Uterus (tissue), 4 donors: ENCODE measurements at regions of chr3 and their contacts with region 1.

Region 1: GRCh38 chr3:1734494-1735122 is 364.1 kb upstream of the CNTN4 start:
- DNase-seq: no peak
- H3K4me3 ChIP-seq: no peak overlapping the region
- H3K27ac ChIP-seq: no peak overlapping the region
- H3K4me1 ChIP-seq: no peaks in the 10 kb centered on the region
- H3K27me3 ChIP-seq: no peaks in the 10 kb centered on the region
- CTCF ChIP-seq: no peak
- POLR2A ChIP-seq: no peak

Region 2: GRCh38 chr3:1752205-1752604 is 17.6 kb after region 1 on chr3:
- intact Hi-C with region 1: loop called (anchors 1 kb)
- DNase-seq: no peak
- H3K4me3 ChIP-seq: no peak overlapping the region
- H3K27ac ChIP-seq: no peak overlapping the region
- H3K4me1 ChIP-seq: no peaks in the 10 kb centered on the region
- H3K27me3 ChIP-seq: no peaks in the 10 kb centered on the region
- CTCF ChIP-seq: no peak
- POLR2A ChIP-seq: no peak

Region 3: GRCh38 chr3:1892459-1892858 is 157.9 kb after region 1 on chr3:
- intact Hi-C with region 1: no loop called
- DNase-seq: no peak
- H3K4me3 ChIP-seq: no peak overlapping the region
- H3K27ac ChIP-seq: no peak overlapping the region
- H3K4me1 ChIP-seq: no peaks in the 10 kb centered on the region
- H3K27me3 ChIP-seq: no peaks in the 10 kb centered on the region
- CTCF ChIP-seq: no peak
- POLR2A ChIP-seq: no peak